ENCODE measurements at regions of chrX and their contacts with region 1.

Region 1: GRCh38 chrX:57453901-57454300 is 137.9 kb upstream of the ZXDB start:
- DNase-seq: peak; percentile 0
- ATAC-seq: peak; percentile 90
- H3K4me3 ChIP-seq: no peak overlapping the region
- H3K27ac ChIP-seq: no peak overlapping the region
- H3K4me1 ChIP-seq: no peaks in the 10 kb centered on the region
- H3K27me3 ChIP-seq: no peaks in the 10 kb centered on the region
- CTCF ChIP-seq: peak; percentile 65 to 71 (median 68)
- EP300 ChIP-seq: no peak
- POLR2A ChIP-seq: no peak
- RAD21 ChIP-seq: peak; percentile 70

Region 2: DNA sequence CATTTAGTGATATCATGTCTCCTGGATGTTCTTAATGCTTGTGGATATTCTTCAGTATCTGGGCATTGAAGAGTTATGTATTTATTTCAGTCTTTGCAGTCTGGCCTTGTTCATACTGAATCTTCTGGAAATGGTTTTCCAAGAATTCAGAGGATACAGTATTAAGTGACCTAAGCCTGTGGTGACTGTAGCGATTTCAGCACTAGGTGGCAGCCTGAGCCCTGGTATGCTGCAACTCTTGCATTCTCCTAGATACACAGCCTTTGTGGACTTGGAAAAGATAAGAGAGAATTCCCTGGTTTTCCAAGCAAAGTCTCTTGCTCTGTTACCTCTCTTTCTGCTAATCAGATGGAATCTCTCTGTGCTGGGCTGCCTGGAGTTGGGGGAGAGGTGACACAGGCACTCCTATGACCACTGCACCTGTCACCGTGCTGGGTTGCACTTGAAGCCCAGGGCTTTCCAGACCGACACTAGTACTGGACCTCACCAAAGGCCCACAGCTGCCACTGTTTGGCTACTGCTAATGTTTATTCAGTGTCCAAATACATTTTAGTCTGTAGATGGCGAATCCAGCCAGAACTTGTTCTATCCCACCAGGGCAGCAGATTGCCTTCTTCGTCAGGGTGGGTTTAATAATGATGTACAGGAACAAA is 297.4 kb before region 1 on chrX:
- CTCF ChIA-PET with region 1: interaction called, 6 read pairs
- POLR2A ChIA-PET with region 1: no interaction called
- RAD21 ChIA-PET with region 1: no interaction called
- SMC1A ChIA-PET with region 1: interaction called, 3 read pairs
- in situ Hi-C with region 1: loop called (anchors 10 kb)
- intact Hi-C with region 1: loop called (anchors 1 kb)
- DNase-seq: no peak
- ATAC-seq: peak; percentile 59; the same call in 2 of the 3 replicates
- H3K4me3 ChIP-seq: no peak overlapping the region
- H3K27ac ChIP-seq: no peak overlapping the region
- H3K4me1 ChIP-seq: no peaks in the 10 kb centered on the region
- H3K27me3 ChIP-seq: no peaks in the 10 kb centered on the region
- CTCF ChIP-seq: peak; percentile 34 to 41 (median 35); a peak in 4 of 6 replicates
- EP300 ChIP-seq: no peak
- POLR2A ChIP-seq: no peak
- RAD21 ChIP-seq: peak; percentile 55

Region 3: DNA sequence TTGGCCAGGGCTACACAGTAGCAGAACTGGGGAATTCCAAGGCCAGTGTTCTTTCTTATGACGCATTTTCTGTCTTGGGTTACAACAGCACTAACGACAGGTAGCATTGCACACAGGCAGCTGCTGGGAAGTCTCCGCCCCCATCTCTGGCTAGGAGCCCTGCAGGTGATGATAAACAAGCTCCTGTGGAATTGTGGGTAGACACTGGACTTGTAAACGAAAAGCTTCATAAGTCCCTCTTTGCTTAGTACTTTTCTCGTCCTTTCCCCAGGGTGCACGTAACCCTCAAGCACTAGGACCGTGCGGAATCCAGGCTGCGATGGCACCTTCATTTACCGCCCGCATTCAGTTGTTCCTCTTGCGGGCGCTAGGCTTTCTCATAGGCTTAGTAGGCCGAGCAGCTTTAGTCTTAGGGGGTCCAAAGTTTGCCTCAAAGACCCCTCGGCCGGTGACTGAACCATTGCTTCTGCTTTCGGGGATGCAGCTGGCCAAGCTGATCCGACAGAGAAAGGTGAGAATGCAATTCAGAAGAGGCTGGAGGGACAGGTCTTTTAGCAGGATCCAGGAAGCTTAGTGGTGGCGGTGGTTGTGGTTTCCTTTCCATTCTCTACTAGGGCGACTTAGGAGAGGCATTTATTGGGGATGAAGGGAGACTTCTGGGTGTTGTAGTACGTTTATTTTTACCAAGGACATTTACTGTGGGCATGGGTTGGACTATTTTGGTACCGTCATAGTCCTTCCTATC is 167.2 kb before region 1 on chrX and contains the start of gene FAAH2:
- CTCF ChIA-PET with region 1: interaction called, 19 read pairs
- POLR2A ChIA-PET with region 1: no interaction called
- RAD21 ChIA-PET with region 1: no interaction called
- SMC1A ChIA-PET with region 1: interaction called, 5 read pairs
- in situ Hi-C with region 1: no loop called
- intact Hi-C with region 1: loop called (anchors 5 kb)
- DNase-seq: peak; percentile 23
- ATAC-seq: peak; percentile 94
- H3K4me3 ChIP-seq: peak within 1 kb of the TSS; percentile 47
- H3K27ac ChIP-seq: peak within 1 kb of the TSS; percentile 15
- H3K4me1 ChIP-seq: no peaks in the 10 kb centered on the region
- H3K27me3 ChIP-seq: no peaks in the 10 kb centered on the region
- CTCF ChIP-seq: 0 out of 6 replicates have a peak, but pooled peaks of 1 of the 3 experiments have one; percentile 5
- EP300 ChIP-seq: peak in 1 of 2 experiments; percentile 30; a peak in 1 of 4 replicates
- POLR2A ChIP-seq: no peak
- RAD21 ChIP-seq: no peak
- polyA plus RNA-seq, gene FAAH2: 1.5 to 2.4 TPM

Region 4: GRCh38 chrX:57481514-57481913 is 27.6 kb after region 1 on chrX:
- CTCF ChIA-PET with region 1: no interaction called
- POLR2A ChIA-PET with region 1: no interaction called
- RAD21 ChIA-PET with region 1: no interaction called
- SMC1A ChIA-PET with region 1: no interaction called
- in situ Hi-C with region 1: no loop called
- intact Hi-C with region 1: no loop called
- DNase-seq: no peak
- ATAC-seq: no peak
- H3K4me3 ChIP-seq: no peak overlapping the region
- H3K27ac ChIP-seq: no peak overlapping the region
- H3K4me1 ChIP-seq: no peaks in the 10 kb centered on the region
- H3K27me3 ChIP-seq: no peaks in the 10 kb centered on the region
- CTCF ChIP-seq: no peak
- EP300 ChIP-seq: no peak
- POLR2A ChIP-seq: no peak
- RAD21 ChIP-seq: no peak